Gastrocnemius medialis (tissue), 4 donors: ENCODE measurements at regions of chrX and their contacts with region 1.

Region 1: DNA sequence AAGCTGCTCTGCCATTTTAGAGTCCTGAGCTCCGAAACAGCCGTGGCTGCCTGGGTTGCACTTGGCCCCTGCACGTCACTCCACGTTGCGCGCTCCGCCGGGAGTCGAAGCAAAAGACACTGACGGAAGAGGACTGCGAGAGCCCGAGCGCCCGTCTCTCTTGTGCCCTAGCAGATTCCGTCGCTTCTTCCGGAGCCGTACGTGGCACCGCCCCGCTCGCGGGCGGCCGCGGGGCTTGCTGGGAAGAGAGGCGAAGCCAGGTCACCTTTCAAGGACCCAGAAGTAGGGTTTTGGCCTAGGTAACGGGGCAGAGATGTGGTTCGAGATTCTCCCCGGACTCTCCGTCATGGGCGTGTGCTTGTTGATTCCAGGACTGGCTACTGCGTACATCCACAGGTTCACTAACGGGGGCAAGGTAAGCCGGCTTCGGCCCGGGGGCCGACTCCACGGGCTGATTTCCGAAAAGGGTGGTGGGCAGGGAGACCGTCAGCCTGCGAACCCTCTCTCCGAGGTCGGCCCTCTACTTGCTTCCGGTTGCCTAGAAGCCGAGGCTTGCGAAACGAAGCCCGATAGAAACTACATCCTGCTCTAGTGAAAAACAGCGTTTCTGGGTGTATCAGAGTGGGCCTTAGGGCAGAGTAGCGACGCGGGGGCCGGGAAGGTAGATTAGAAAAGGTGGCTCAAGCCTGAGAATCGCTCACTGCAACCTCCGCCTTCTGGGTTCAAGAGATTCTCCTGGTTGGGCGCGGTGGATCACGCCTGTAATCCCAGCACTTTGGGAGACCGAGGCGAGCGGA is at the starts of genes NDUFA1 and RNF113A:
- DNase-seq: peak; percentile 72 to 88
- ATAC-seq: peak; percentile 94 to 95
- H3K4me3 ChIP-seq: peak within 1 kb of the TSS; percentile 69 to 83 (median 76)
- H3K27ac ChIP-seq: peak within 1 kb of the TSS; percentile 93 to 98 (median 94)
- H3K4me1 ChIP-seq: peaks cover 6 to 32% of the 10 kb centered on the region in 2 donors
- H3K27me3 ChIP-seq: no peaks in the 10 kb centered on the region
- CTCF ChIP-seq: no peak
- POLR2A ChIP-seq: peak; percentile 69 to 75
- total RNA-seq, gene NDUFA1: 101 to 119 (median 105) TPM
- total RNA-seq, gene RNF113A: 8.9 to 15.7 (median 12.1) TPM

Region 2: GRCh38 chrX:119574394-119575266 is 297.2 kb before region 1 on chrX and contains the start of gene UBE2A:
- in situ Hi-C with region 1: no loop called
- intact Hi-C with region 1: loop called (anchors 10 kb)
- DNase-seq: peak; percentile 82 to 89
- ATAC-seq: peak; percentile 88 to 95
- H3K4me3 ChIP-seq: peak within 1 kb of the TSS; percentile 66 to 75 (median 72)
- H3K27ac ChIP-seq: peak within 1 kb of the TSS; percentile 84 to 96 (median 94)
- H3K4me1 ChIP-seq: peaks cover 0 to 7% of the 10 kb centered on the region in 2 donors
- H3K27me3 ChIP-seq: no peaks in the 10 kb centered on the region
- CTCF ChIP-seq: peak in 4 of 5 experiments; percentile 21 to 53 (median 38)
- POLR2A ChIP-seq: peak; percentile 80 to 88
- total RNA-seq, gene UBE2A: 28.1 to 41.7 (median 35.9) TPM

Region 3: GRCh38 chrX:119791438-119792231 is 80.2 kb before region 1 on chrX and contains the start of gene RPL39:
- in situ Hi-C with region 1: no loop called
- intact Hi-C with region 1: loop called (anchors 5 kb)
- DNase-seq: peak; percentile 71 to 80
- ATAC-seq: peak; percentile 98
- H3K4me3 ChIP-seq: peak within 1 kb of the TSS; percentile 76 to 95 (median 82)
- H3K27ac ChIP-seq: peak within 1 kb of the TSS; percentile 94 to 96 (median 96)
- H3K4me1 ChIP-seq: peaks cover 14 to 26% of the 10 kb centered on the region in 2 donors
- H3K27me3 ChIP-seq: no peaks in the 10 kb centered on the region
- CTCF ChIP-seq: no peak
- POLR2A ChIP-seq: peak; percentile 72 to 86
- total RNA-seq, gene RPL39: 3,033 to 5,904 (median 3,913) TPM

Region 4: GRCh38 chrX:119852382-119853353 is 19.1 kb before region 1 on chrX and contains the start of gene UPF3B:
- in situ Hi-C with region 1: no loop called
- intact Hi-C with region 1: loop called (anchors 1 kb)
- DNase-seq: peak; percentile 95 to 97
- ATAC-seq: peak; percentile 98 to 99
- H3K4me3 ChIP-seq: peak within 1 kb of the TSS; percentile 75 to 87 (median 76)
- H3K27ac ChIP-seq: peak within 1 kb of the TSS; percentile 89 to 95 (median 93)
- H3K4me1 ChIP-seq: no peaks in the 10 kb centered on the region
- H3K27me3 ChIP-seq: no peaks in the 10 kb centered on the region
- CTCF ChIP-seq: no peak
- POLR2A ChIP-seq: peak; percentile 22 to 71
- total RNA-seq, gene UPF3B: 4.7 to 6.3 (median 5.7) TPM

Region 5: GRCh38 chrX:119943185-119943988 is 71.6 kb after region 1 on chrX and contains the start of gene NKAP:
- in situ Hi-C with region 1: no loop called
- intact Hi-C with region 1: loop called (anchors 5 kb)
- DNase-seq: peak; percentile 61 to 75
- ATAC-seq: peak; percentile 98 to 99
- H3K4me3 ChIP-seq: peak within 1 kb of the TSS; percentile 61 to 76 (median 66)
- H3K27ac ChIP-seq: peak within 1 kb of the TSS; percentile 81 to 90 (median 86)
- H3K4me1 ChIP-seq: peaks cover 6 to 15% of the 10 kb centered on the region in 2 donors
- H3K27me3 ChIP-seq: no peaks in the 10 kb centered on the region
- CTCF ChIP-seq: no peak
- POLR2A ChIP-seq: peak; percentile 40 to 46
- total RNA-seq, gene NKAP: 3.4 to 5.1 (median 4.3) TPM

Region 6: GRCh38 chrX:120250522-120251271 is 378.9 kb after region 1 on chrX and contains the start of gene ZBTB33:
- in situ Hi-C with region 1: no loop called
- intact Hi-C with region 1: loop called (anchors 5 kb)
- DNase-seq: peak; percentile 80 to 89
- ATAC-seq: peak; percentile 95 to 96
- H3K4me3 ChIP-seq: peak within 1 kb of the TSS; percentile 66 to 83 (median 81)
- H3K27ac ChIP-seq: peak within 1 kb of the TSS; percentile 89 to 94 (median 91)
- H3K4me1 ChIP-seq: peaks cover 0 to 5% of the 10 kb centered on the region in 2 donors
- H3K27me3 ChIP-seq: no peaks in the 10 kb centered on the region
- CTCF ChIP-seq: peak; percentile 60 to 74 (median 62)
- POLR2A ChIP-seq: peak; percentile 58 to 65
- total RNA-seq, gene ZBTB33: 9.2 to 12.4 (median 9.8) TPM